ENCODE measurements at regions of chr5 and their contacts with region 1.

Region 1: DNA sequence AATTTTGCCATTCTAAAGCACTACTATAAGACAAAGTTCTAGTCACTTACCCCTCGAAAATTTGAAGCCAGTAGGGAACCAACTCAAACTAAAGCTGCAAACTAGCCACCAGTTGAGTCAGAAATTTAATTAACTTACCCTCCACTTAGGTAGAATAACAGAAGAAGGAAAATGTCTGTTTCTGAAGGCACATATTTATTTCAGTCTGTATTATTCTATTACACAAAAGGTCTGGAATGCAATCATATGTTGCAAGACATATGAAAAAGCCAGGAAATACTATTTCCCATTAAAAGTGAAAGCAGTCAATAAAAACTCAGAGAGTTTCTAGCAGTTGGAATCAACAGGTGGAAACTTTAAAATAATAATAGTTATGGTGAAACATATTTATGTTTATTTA is 79.2 kb upstream of the SLCO4C1 start:
- DNase-seq: no peak
- ATAC-seq: no peak
- H3K4me3 ChIP-seq: no peak overlapping the region
- H3K27ac ChIP-seq: no peak overlapping the region
- H3K4me1 ChIP-seq: no peaks in the 10 kb centered on the region
- H3K27me3 ChIP-seq: no peaks in the 10 kb centered on the region
- CTCF ChIP-seq: no peak
- EP300 ChIP-seq: no peak
- POLR2A ChIP-seq: no peak
- RAD21 ChIP-seq: no peak

Region 2: DNA sequence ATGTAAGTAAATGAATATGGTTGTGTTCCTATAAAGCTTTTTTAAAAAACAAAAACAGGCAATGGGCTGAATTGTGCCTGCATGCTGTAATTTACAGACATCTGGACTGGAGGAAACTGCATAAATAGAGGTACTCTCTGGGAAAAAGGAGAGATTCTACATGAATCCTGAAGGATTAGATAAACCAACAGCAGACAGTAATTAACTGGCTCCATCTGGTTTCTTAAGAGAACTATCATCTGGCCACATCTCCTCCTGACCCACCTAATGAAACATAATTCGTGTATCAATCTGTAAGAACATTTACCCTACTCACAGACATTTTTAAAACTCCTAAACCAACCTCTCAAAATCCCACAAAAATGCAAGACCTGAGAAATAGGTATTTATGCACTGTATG is 944.1 kb before region 1 on chr5:
- CTCF ChIA-PET with region 1: no interaction called
- POLR2A ChIA-PET with region 1: no interaction called
- in situ Hi-C with region 1: no loop called
- intact Hi-C with region 1: loop called (anchors 5 kb)
- DNase-seq: no peak
- ATAC-seq: no peak
- H3K4me3 ChIP-seq: no peak overlapping the region
- H3K27ac ChIP-seq: no peak overlapping the region
- H3K4me1 ChIP-seq: no peaks in the 10 kb centered on the region
- H3K27me3 ChIP-seq: no peaks in the 10 kb centered on the region
- CTCF ChIP-seq: no peak
- EP300 ChIP-seq: no peak
- POLR2A ChIP-seq: no peak
- RAD21 ChIP-seq: no peak